ENCODE measurements at regions of chr3 and their contacts with region 1.

Region 1: DNA sequence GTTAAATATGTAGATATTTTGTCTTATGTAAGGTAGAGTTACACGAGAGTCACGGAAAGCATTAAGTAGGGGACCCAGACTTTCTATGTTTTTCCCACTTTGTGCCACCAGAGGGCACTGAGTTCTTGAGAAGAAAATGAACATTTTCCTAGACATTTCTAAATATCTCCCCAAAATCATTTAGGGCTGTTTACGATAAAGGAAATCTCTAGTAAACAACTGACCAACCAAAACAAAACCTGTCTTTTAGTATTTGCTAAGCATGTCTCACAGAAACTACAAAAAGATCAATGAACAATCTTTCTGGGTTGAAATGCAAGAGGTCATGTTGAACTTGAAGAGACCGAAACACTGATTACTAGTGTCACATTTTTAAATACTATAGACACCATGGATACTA is 16.1 kb downstream of the POU1F1 start:
- DNase-seq: peak; percentile 24
- CTCF ChIP-seq: peak; percentile 74

Region 2: DNA sequence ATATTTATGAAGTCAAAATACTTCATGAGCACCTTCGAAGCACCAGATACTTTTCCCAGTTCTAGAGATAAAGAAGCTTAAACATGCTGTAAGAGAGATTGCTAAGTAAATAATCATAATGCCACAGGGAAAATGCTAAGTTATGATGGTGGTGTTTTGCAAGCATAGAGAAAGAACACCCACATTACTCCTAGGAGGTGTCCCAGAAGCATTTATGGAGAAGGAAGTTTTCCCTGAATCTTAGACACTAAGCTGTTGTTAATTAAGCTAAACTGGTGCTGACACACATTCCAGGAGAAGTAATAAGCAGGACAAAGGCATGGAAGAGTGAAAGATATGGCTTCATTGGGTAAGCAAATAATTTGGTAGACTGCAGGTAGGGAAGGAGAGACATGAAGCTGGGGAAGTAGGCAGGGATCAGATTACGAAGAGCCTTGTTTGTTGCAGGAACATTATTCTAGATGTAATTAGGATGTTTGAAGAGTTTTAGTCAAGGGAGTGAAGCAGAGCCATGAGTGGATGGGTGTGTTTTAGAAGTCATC is 73.6 kb before region 1 on chr3:
- CTCF ChIA-PET with region 1: no interaction called
- POLR2A ChIA-PET with region 1: no interaction called
- DNase-seq: no peak
- CTCF ChIP-seq: no peak

Region 3: GRCh38 chr3:87196876-87197275 is 63.4 kb before region 1 on chr3:
- CTCF ChIA-PET with region 1: no interaction called
- POLR2A ChIA-PET with region 1: no interaction called
- DNase-seq: no peak
- CTCF ChIP-seq: no peak

Region 4: GRCh38 chr3:87247430-87247773 is 12.9 kb before region 1 on chr3:
- CTCF ChIA-PET with region 1: interaction called, 49 read pairs
- POLR2A ChIA-PET with region 1: no interaction called
- DNase-seq: no peak
- CTCF ChIP-seq: no peak

Region 5: GRCh38 chr3:87270908-87271700 is 10.8 kb after region 1 on chr3:
- CTCF ChIA-PET with region 1: interaction called, 27 read pairs
- POLR2A ChIA-PET with region 1: no interaction called
- DNase-seq: no peak
- CTCF ChIP-seq: no peak

Region 6: DNA sequence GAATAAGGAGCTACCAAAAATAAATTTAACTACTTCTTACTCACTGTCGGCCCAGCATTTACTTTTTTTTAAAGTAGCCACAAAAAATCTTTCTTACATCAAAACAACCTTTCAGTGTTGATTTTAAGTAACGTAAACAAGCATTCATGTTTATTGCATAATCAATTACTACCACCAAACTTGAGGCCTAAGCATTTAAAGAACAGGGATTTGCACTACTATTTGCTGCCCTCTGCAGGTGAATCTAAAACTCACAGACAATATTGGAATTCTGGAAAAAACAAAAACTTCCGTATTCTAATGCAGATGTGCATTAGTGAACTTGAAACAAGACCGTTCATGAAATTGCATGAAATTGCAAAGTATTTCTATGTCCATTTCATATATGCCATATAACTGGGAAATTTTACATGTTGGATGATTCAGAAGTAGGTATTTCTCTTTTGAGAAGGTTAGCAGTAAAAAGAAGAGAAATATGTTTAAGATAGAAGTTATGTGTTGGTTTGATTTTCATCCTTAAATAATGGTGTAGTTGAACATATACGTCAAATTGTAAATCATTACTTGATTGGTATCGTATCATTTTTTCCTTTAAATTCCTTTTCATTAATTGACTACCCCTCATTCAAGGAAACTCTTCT is 743.0 kb after region 1 on chr3:
- CTCF ChIA-PET with region 1: interaction called, 11 read pairs
- POLR2A ChIA-PET with region 1: no interaction called
- DNase-seq: peak; percentile 16
- CTCF ChIP-seq: peak; percentile 62